PC-3 (cell line): ENCODE measurements at regions of chr11 and their contacts with region 1.

Region 1: DNA sequence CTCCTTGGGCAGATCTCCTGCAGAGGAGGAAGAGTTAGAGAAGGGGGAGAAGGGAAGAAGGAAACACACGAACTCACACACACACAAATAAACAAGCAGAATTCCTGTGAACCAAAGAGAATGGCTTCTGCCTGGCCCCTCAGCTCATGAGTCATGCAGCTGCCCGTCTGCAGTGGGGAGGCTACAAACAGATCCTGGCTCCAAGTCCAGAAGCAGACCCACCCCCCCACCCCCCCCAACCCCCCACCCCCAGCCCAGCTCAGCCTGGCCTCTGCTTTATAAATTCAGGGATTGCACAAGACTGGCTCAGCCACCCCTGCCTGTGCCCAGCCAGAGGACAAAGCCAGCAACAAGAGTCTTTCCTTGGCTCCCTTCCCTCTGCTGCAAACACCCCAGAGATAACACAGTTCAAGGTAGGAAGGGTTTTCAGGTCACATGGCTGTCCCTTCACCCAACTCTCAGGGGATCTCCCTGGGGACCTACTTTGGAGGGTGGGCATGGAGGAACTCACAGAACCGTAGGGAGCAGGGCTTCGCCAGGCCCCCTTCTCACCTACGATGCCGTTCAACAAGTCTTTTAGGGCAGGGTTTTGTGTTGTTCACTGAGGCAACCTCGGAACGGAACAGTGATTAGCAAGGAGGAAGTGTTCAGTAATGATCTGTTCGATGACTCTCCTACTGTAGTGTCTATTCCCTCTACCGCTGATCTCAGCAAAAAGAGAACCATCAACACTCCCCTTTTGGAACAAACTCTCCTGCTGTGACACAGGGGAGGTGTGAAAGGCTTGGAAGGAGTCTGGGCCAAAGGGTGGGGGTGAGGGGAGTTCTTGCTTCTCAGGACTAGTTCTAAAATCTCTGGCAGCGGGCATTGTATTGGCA is 35.5 kb downstream of the RPL27A start:
- DNase-seq: peak; percentile 73
- ATAC-seq: peak; percentile 15
- H3K4me3 ChIP-seq: peak overlapping the region; percentile 50
- H3K27ac ChIP-seq: peak overlapping the region; percentile 98
- H3K4me1 ChIP-seq: peaks cover 62% of the 10 kb centered on the region
- H3K27me3 ChIP-seq: no peaks in the 10 kb centered on the region
- CTCF ChIP-seq: no peak

Region 2: GRCh38 chr11:8744423-8744822 is 26.3 kb after region 1 on chr11:
- CTCF ChIA-PET with region 1: no interaction called
- POLR2A ChIA-PET with region 1: interaction called, 3 read pairs
- intact Hi-C with region 1: loop called (anchors 2 kb)
- DNase-seq: peak; percentile 82
- ATAC-seq: peak; percentile 96
- H3K4me3 ChIP-seq: no peak overlapping the region
- H3K27ac ChIP-seq: 0 out of 2 replicates have a peak overlapping the region, but pooled peaks have one; percentile 18
- H3K4me1 ChIP-seq: peaks cover 10% of the 10 kb centered on the region
- H3K27me3 ChIP-seq: no peaks in the 10 kb centered on the region
- CTCF ChIP-seq: no peak

Region 3: GRCh38 chr11:8813658-8814057 is 95.5 kb after region 1 on chr11:
- CTCF ChIA-PET with region 1: interaction called, 3 read pairs
- POLR2A ChIA-PET with region 1: no interaction called
- intact Hi-C with region 1: loop called (anchors 1 kb)
- DNase-seq: peak; percentile 79
- ATAC-seq: peak; percentile 58
- H3K4me3 ChIP-seq: no peak overlapping the region
- H3K27ac ChIP-seq: peak overlapping the region; percentile 53
- H3K4me1 ChIP-seq: peaks cover 30% of the 10 kb centered on the region
- H3K27me3 ChIP-seq: no peaks in the 10 kb centered on the region
- CTCF ChIP-seq: peak; percentile 88